H1 (cell line): ENCODE measurements at regions of chr18 and their contacts with region 1.

Region 1: GRCh38 chr18:37299471-37300304 is 265.9 kb downstream of the CELF4 start:
- DNase-seq: no peak
- H3K4me3 ChIP-seq: no peak overlapping the region
- H3K27ac ChIP-seq: no peak overlapping the region
- H3K4me1 ChIP-seq: no peaks in the 10 kb centered on the region; a peak in 1 of 7 replicates
- H3K27me3 ChIP-seq: no peaks in the 10 kb centered on the region
- CTCF ChIP-seq: no peak
- EP300 ChIP-seq: no peak
- POLR2A ChIP-seq: no peak
- RAD21 ChIP-seq: no peak

Region 2: GRCh38 chr18:37065254-37065653 is 234.4 kb before region 1 on chr18:
- CTCF ChIA-PET with region 1: no interaction called
- POLR2A ChIA-PET with region 1: no interaction called
- DNase-seq: no peak
- H3K4me3 ChIP-seq: no peak overlapping the region
- H3K27ac ChIP-seq: no peak overlapping the region
- H3K4me1 ChIP-seq: no peaks in the 10 kb centered on the region
- H3K27me3 ChIP-seq: no peaks in the 10 kb centered on the region
- CTCF ChIP-seq: no peak
- EP300 ChIP-seq: no peak
- POLR2A ChIP-seq: no peak
- RAD21 ChIP-seq: no peak

Region 3: DNA sequence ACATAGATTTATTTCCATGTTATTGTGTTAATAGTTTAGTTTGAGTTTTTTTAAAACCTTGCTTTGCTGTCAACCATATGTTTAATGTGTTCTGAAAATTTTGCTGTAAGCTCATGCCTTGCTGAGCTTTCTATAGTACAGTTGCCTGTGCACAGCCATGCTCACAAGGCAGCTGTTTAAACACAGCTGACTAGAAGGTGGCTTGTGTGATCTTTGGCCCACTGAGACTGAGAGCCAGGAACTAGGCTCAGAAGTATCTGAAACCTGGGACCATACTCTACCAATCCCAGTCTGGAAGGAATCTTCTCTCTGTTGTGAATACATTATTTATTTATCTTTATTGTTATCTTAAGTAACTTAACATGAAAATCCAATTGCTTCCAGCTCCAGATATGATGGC is 120.3 kb before region 1 on chr18:
- CTCF ChIA-PET with region 1: no interaction called
- POLR2A ChIA-PET with region 1: no interaction called
- DNase-seq: no peak
- H3K4me3 ChIP-seq: no peak overlapping the region
- H3K27ac ChIP-seq: no peak overlapping the region
- H3K4me1 ChIP-seq: peaks cover 0 to 15% (median 9%) of the 10 kb centered on the region in 4 experiments; a peak in 5 of 7 replicates
- H3K27me3 ChIP-seq: no peaks in the 10 kb centered on the region
- CTCF ChIP-seq: no peak
- EP300 ChIP-seq: no peak
- POLR2A ChIP-seq: no peak
- RAD21 ChIP-seq: no peak

Region 4: GRCh38 chr18:37282386-37283037 is 17.2 kb before region 1 on chr18:
- CTCF ChIA-PET with region 1: interaction called, 26 read pairs
- POLR2A ChIA-PET with region 1: no interaction called
- DNase-seq: no peak
- H3K4me3 ChIP-seq: no peak overlapping the region
- H3K27ac ChIP-seq: no peak overlapping the region
- H3K4me1 ChIP-seq: peaks cover 0 to 3% (median 0%) of the 10 kb centered on the region in 4 experiments; a peak in 2 of 7 replicates
- H3K27me3 ChIP-seq: no peaks in the 10 kb centered on the region; a peak in 1 of 7 replicates
- CTCF ChIP-seq: peak; percentile 76 to 83 (median 82)
- EP300 ChIP-seq: no peak
- POLR2A ChIP-seq: no peak
- RAD21 ChIP-seq: peak; percentile 56 to 71

Region 5: DNA sequence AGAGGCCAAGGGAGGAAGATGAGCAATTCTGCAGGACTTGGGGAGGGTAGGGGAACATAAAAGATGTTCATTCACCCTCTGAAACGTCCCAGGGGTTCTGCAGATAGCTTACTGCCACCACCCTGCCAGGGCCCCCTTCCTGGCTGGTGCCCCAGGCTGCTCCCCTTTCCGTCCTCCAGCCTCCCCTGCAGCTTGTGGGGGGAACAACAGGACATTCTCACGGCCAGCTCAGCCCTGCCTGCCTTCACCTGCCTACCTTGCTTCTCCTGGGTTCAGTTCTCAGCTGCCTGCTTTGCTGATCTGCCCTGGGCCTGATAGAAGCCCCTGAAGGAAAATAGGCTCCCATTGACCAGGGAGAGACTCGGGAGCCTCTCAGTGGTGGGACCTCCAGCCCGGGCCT is 14.8 kb after region 1 on chr18:
- CTCF ChIA-PET with region 1: interaction called, 26 read pairs
- POLR2A ChIA-PET with region 1: no interaction called
- DNase-seq: no peak
- H3K4me3 ChIP-seq: no peak overlapping the region
- H3K27ac ChIP-seq: no peak overlapping the region
- H3K4me1 ChIP-seq: peaks cover 0 to 3% (median 0%) of the 10 kb centered on the region in 4 experiments; a peak in 3 of 7 replicates
- H3K27me3 ChIP-seq: no peaks in the 10 kb centered on the region
- CTCF ChIP-seq: peak in 2 of 3 experiments; percentile 30 to 36; a peak in 3 of 4 replicates
- EP300 ChIP-seq: no peak
- POLR2A ChIP-seq: no peak
- RAD21 ChIP-seq: peak; percentile 43 to 53